ENCODE measurements at regions of chr12 and their contacts with region 1.

Region 1: DNA sequence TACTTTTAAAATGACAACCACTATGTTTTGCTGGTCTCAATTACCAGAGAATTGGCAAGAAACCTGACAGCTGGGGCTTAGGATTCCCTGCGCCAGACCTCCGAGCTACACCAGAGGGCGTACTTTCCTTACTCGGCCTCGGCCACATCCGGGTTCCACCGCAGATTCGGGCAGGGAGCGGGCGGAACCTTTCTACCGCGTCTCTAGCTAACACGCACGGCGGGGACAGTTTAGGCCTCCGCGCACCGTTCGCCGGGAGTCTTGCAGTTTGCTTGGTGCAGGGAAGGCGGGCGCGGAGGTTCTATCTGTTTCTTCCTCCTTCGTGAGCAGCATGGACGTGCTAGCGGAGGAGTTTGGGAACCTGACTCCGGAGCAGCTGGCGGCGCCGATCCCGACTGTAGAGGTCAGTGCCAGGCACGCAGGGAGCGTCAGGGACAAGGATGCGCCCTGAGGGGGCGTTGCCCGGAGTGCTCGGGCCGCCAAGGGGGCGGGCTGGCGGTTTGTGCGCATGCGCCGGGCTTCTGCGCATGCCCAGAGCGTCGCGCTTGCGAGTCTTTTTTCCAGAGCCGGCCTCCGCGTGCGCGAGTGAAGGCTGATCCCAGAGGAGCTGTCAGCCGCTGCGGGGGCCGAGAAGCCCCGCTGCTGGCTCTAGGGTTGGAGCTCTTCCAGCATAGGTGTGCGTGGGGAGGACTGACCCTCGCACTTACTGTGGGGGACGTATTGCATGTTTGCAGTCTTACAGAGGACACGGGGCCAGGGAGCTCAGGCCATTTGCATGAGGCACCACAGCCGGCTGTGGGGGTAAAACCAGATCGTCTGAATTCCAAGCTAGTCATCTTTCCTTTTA is at the start of gene POLR3B:
- DNase-seq: peak; percentile 69
- H3K4me3 ChIP-seq: peak within 1 kb of the TSS; percentile 97
- CTCF ChIP-seq: peak; percentile 90

Region 2: GRCh38 chr12:106345739-106346138 is 12.0 kb before region 1 on chr12:
- CTCF ChIA-PET with region 1: interaction called, 88 read pairs
- POLR2A ChIA-PET with region 1: interaction called, 5 read pairs
- DNase-seq: no peak
- H3K4me3 ChIP-seq: no peak overlapping the region
- CTCF ChIP-seq: peak; percentile 49

Region 3: DNA sequence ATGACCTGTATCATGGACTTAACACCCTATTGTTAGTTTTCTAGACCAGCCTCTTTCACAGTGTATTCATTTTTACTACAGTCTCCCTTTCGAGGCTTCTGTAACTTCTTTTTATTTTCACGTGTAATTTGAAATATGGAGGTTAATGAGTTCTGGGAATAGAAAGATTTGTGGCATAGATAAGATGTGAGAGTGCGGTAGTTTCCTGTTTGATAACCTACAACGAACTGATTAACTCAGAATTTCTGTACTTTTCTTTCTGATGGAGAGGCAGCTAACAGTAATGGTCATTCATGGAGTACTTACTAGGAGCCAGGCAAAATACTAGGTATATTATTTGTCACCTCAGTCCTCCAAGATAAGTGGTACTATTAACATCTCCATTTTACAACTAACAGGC is 21.0 kb after region 1 on chr12:
- CTCF ChIA-PET with region 1: interaction called, 12 read pairs
- POLR2A ChIA-PET with region 1: no interaction called
- DNase-seq: no peak
- H3K4me3 ChIP-seq: no peak overlapping the region
- CTCF ChIP-seq: no peak

Region 4: DNA sequence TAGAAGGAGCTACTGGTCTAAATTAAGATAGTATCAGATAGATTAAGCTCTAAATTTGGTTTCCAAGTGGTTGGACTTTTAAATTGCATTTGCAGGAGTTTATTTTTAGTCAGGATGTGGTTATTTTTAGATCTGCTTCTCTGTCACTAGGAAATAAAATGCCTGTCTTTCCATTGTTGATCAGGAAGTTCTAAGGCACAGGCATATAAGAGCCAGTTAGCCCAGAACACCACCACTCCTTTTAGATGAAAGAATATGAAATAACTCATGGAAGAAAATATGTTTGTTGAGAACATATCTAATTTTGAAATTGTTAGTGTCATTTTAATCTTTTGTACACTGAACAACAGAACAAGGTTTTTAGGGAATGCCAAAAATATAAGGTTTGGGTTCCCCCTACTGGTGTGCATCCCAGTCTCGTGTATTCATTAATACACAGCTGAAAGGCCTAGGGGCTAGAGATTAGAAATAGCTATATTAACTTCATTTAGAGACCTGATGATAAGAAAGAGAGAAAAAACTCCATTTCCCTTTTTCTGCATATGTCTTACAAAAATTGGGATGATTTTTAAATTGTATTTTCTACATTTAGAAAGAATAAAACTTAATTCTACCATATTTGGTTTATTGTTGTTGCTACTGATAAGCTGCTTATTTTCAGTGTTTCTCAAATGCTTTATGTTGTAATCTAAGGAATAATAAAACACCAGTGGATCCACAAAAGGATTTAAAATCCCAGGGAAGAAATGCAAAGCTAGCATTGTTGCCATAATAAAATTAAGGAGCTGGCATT is 483.9 kb after region 1 on chr12:
- CTCF ChIA-PET with region 1: interaction called, 34 read pairs
- POLR2A ChIA-PET with region 1: no interaction called
- DNase-seq: no peak
- H3K4me3 ChIP-seq: no peak overlapping the region
- CTCF ChIP-seq: peak; percentile 44